PC-9 (cell line): ENCODE measurements at regions of chr1 and their contacts with region 1.

Region 1: DNA sequence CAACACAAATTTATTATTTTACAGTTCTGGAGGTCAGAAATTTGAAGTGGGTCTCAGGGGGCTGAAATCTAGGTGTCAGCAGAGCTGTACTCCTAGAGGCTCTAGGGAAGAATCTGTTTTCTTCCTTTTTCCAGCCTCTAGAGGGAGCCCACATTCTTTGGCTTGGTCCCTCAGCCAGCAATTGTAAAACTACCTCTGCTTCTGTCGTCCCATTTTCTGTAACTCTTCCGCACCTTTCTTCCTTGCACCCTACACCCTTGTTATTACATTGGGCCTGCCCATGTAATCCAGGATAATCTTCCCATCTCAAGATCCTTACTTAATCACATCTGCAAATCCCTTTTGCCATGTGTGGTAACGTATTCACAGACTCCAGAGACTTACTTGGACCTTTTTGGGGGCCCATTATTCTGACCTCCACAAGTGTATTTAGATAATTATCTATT is 24.8 kb upstream of the THEM4 start:
- DNase-seq: peak; percentile 54 to 58
- H3K4me3 ChIP-seq: no peak overlapping the region
- H3K27ac ChIP-seq: no peak overlapping the region
- H3K4me1 ChIP-seq: peaks cover 12% of the 10 kb centered on the region; the same call in 1 of the 2 replicates
- H3K27me3 ChIP-seq: no peaks in the 10 kb centered on the region
- CTCF ChIP-seq: peak; percentile 89

Region 2: GRCh38 chr1:151888972-151889570 is 45.0 kb before region 1 on chr1:
- CTCF ChIA-PET with region 1: no interaction called
- POLR2A ChIA-PET with region 1: no interaction called
- intact Hi-C with region 1: loop called (anchors 1 kb)
- DNase-seq: peak in 1 of 2 experiments; percentile 38
- H3K4me3 ChIP-seq: no peak overlapping the region
- H3K27ac ChIP-seq: no peak overlapping the region
- H3K4me1 ChIP-seq: peaks cover 20% of the 10 kb centered on the region
- H3K27me3 ChIP-seq: no peaks in the 10 kb centered on the region
- CTCF ChIP-seq: peak; percentile 69

Region 3: GRCh38 chr1:152029144-152029928 is 95.3 kb after region 1 on chr1:
- CTCF ChIA-PET with region 1: no interaction called
- POLR2A ChIA-PET with region 1: interaction called, 10 read pairs
- intact Hi-C with region 1: no loop called
- DNase-seq: peak; percentile 50 to 77
- H3K4me3 ChIP-seq: peak overlapping the region; percentile 20; the same call in 1 of the 2 replicates
- H3K27ac ChIP-seq: peak overlapping the region; percentile 97
- H3K4me1 ChIP-seq: peaks cover 86% of the 10 kb centered on the region
- H3K27me3 ChIP-seq: no peaks in the 10 kb centered on the region
- CTCF ChIP-seq: no peak